Prostate gland (tissue), 2 donors: ENCODE measurements at regions of chr3 and their contacts with region 1.

Region 1: DNA sequence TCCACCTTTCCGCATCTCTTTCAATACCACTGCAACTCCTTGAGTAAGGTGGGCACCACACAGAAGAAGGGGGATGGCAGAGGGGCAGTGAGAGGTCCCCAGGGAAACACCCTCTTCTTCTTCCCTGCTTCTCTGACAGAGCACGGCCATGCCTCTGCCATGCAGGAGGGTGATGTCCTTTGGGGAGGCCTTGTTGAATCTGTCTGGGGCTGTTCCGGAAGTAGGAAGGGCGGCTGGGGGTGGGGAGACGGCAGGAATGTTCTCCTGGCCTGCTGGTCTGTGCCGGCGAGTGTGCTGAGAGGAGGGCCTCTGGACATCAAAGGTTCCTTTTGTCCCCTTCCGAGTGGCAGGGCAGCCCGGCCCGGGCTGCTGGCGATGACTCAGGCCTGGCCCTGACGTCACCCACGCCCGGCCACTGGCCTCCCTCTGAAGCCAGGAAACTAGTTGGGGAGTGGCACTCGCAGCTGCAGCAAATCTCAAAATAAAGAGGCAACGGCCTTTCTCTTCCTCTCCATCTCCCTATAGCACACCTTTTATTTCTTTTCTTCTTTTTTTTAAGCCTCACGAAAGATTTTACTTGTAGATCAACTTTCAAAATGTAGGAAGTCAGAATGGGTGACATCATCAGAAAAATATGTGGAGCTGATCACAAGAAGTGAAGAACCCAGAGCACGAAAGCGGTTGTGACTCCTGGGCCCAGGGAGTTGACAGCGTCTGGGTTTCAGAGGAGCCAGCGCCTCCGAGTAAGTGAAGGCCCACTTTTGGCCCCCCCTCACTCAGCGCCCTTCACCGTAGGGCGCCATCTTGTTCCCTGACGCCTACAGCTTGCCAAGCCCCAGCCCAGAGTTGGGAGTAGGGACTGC is at the start of gene ZBTB38:
- DNase-seq: peak; percentile 75
- H3K4me3 ChIP-seq: peak within 1 kb of the TSS in 1 of 2 donors; percentile 16
- H3K27ac ChIP-seq: peak within 1 kb of the TSS; percentile 89 to 92
- H3K4me1 ChIP-seq: peaks cover 22% of the 10 kb centered on the region
- H3K27me3 ChIP-seq: no peaks in the 10 kb centered on the region
- CTCF ChIP-seq: no peak
- POLR2A ChIP-seq: peak; percentile 69
- total RNA-seq, gene ZBTB38: 151 to 169 TPM

Region 2: DNA sequence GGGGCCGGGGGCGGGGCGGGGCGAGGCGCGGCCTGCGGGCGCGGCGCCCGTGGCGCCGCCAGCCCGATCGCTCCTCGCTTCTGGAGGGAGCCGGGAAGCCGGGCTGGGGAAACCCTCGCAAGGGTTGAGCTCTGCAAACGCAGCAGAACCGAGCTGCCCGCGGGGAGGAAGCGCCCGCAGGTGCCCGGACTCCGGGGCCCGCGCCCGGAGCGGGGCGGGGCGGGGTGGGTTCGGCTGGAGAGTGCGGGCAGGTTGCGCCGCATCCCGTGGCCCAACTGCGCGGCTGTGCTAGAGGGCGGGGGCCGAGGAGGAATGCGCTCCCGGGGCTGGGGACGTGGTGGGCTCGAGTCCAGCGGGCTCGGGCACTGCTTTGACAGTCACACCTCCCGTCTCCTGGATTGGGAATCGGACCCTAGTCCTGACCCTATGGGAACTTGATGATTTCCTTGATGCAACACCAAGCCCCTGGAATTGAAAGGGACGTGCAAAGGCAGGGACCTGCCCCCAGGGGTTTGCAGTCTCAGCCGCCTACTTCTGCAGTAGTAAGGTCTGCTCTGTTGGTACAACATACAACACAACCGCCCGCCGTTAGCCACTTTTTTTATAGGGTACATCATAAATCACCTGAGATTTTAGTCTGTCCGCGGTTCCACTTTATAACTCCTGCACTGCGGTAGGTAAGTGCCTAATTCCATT is 34.3 kb after region 1 on chr3:
- intact Hi-C with region 1: loop called (anchors 2 kb)
- DNase-seq: peak; percentile 75
- H3K4me3 ChIP-seq: peak overlapping the region; percentile 79 to 83
- H3K27ac ChIP-seq: peak overlapping the region; percentile 97 to 99
- H3K4me1 ChIP-seq: peaks cover 3% of the 10 kb centered on the region
- H3K27me3 ChIP-seq: no peaks in the 10 kb centered on the region
- CTCF ChIP-seq: no peak
- POLR2A ChIP-seq: peak; percentile 53